ENCODE measurements at regions of chr2 and their contacts with region 1.

Region 1: GRCh38 chr2:179751163-179751809 is 110.1 kb downstream of the ZNF385B start:
- DNase-seq: no peak
- H3K4me3 ChIP-seq: no peak overlapping the region
- CTCF ChIP-seq: peak; percentile 38

Region 2: DNA sequence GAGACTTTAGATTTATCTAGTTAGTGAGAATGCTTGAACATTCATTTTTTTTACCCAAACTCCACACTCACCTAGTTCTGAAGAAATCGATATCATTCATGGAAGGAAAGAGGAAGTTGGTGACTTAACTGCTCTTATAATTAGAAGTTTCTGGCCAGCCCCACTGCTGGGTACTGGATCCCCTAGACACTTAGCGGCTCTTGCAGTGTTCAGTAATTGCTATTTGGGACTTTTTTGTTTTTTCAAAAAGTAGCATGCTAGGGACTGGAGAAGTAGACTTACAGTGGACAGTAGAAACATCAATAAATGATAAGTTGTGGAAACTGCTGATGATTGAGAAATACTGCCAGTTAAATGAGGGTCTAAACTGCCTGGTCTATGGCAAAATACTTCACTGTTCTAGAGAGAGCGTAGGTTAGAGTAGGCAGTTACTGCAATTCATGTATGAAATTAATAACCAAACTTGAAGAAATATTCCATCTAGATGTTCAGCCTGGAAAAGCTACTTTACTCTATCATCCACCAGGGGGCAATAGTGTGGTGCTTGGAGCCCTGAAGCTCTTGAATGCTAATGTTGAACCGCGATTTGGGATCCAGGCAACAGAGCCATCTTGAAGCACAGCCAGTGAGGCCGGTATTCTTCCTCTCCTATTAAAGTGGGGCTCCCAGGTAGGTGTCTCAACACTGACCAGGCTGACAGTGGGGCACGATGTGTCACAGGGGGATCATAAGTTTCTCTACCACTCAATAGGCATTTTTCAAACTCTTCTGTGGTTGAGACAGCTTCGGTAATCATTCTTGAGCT is 340.5 kb before region 1 on chr2:
- CTCF ChIA-PET with region 1: interaction called, 17 read pairs
- POLR2A ChIA-PET with region 1: no interaction called
- DNase-seq: no peak
- H3K4me3 ChIP-seq: no peak overlapping the region
- CTCF ChIP-seq: peak; percentile 73